CD8-positive, alpha-beta T cell (primary cell): ENCODE measurements at regions of chr22 and their contacts with region 1.

Region 1: DNA sequence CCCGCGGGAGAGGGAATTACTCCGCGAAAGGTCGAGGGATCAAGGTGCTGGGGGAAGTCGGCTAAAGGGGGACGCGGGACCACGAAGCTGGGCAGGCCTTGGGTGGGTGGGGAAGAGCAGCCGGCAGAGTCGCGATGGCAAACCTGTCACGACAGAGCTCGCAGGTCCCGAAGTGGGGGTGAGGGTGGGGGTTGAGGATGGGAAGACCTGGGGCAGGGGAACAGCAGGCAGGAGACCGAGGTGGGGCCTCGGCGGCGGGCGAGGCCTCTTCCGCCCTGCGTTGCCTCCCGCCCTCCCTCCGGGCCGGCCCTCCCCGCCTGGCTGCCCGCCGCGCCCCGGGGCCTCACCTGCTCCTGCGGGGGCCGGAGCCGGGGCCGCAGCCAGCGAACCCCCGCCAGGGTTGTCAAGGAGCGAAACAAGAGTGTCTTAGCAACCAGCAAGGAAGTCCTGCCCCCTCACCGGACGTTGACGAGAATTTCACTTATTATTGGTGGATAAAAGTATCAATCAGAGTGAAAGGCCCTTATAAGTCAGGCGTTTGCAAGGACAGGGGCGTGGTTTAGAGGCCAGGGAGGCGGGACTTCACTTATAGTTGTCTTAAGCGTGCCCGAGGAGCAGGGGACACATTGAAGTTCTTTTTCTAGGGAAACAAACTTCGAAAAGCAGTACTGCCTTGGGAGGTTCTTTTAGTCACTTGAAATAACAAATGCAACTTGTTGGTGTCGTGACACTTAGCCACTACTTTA is at the start of gene DNAL4:
- DNase-seq: peak; percentile 82 to 97 (median 92)
- ATAC-seq: peak; percentile 98
- H3K4me3 ChIP-seq: peak within 1 kb of the TSS; percentile 62 to 67
- H3K4me3 Mint-ChIP-seq: peak within 1 kb of the TSS; percentile 92
- H3K27ac ChIP-seq: peak within 1 kb of the TSS; percentile 68 to 75
- H3K27ac Mint-ChIP-seq: peak within 1 kb of the TSS; percentile 94
- H3K4me1 ChIP-seq: peaks cover 25% of the 10 kb centered on the region
- H3K4me1 Mint-ChIP-seq: peaks cover 31% of the 10 kb centered on the region
- H3K27me3 ChIP-seq: no peaks in the 10 kb centered on the region
- H3K27me3 Mint-ChIP-seq: peaks cover 10% of the 10 kb centered on the region
- CTCF ChIP-seq: no peak
- total RNA-seq, gene DNAL4: 2.5 to 3.6 TPM

Region 2: DNA sequence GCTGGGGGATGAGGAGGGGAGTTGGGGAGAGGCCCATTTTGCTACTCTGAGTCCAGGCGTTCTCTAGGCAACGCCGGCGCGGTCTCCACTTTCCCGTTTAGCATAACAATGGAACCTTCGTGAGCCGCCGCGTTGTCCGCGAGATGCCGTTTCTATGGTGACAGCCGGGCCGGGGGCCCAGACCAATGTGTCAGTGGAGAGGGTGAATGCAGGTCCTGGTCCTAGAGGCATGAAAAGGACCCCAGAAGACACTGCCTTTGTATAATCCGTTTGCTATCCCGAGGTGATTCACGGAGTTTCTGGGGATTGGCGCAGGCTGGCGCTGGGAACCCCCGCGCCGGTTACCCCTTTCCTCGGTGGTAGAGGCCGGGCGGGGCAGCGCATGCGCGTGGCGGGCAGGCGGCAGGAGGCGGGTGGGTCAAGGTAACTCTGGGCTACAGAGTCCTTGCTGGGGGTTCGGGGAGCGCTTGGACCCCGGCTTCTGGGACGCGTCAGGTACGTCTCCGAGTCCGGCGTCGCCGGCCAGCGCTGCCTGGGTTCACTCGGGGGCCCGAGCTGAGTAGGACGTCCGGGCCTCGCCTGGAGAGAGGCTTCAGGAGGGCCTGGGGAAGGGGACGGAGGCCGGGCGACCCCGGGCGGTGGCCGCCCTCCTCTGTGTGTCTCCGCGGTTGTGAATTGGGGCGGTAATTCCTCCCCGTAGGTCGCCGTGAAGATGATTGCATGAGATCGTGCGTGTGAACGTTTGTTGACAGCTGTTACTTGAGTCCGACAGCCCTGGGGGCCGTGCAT is 137.4 kb before region 1 on chr22 and contains the starts of genes CBY1 and FAM227A:
- CTCF ChIA-PET with region 1: no interaction called
- POLR2A ChIA-PET with region 1: no interaction called
- intact Hi-C with region 1: loop called in 1 of 2 experiments (anchors 5 kb)
- DNase-seq: peak; percentile 76 to 94 (median 87)
- ATAC-seq: peak; percentile 84
- H3K4me3 ChIP-seq: peak within 1 kb of the TSS; percentile 75 to 94
- H3K4me3 Mint-ChIP-seq: peak within 1 kb of the TSS; percentile 96
- H3K27ac ChIP-seq: peak within 1 kb of the TSS; percentile 94 to 96
- H3K27ac Mint-ChIP-seq: peak within 1 kb of the TSS; percentile 99
- H3K4me1 ChIP-seq: peaks cover 11% of the 10 kb centered on the region
- H3K4me1 Mint-ChIP-seq: peaks cover 30% of the 10 kb centered on the region
- H3K27me3 ChIP-seq: no peaks in the 10 kb centered on the region
- H3K27me3 Mint-ChIP-seq: no peaks in the 10 kb centered on the region
- CTCF ChIP-seq: no peak
- total RNA-seq, gene CBY1: 7.6 to 8.9 TPM
- total RNA-seq, gene FAM227A: 0.73 TPM in 1 of 2 experiments, not detected in the other

Region 3: DNA sequence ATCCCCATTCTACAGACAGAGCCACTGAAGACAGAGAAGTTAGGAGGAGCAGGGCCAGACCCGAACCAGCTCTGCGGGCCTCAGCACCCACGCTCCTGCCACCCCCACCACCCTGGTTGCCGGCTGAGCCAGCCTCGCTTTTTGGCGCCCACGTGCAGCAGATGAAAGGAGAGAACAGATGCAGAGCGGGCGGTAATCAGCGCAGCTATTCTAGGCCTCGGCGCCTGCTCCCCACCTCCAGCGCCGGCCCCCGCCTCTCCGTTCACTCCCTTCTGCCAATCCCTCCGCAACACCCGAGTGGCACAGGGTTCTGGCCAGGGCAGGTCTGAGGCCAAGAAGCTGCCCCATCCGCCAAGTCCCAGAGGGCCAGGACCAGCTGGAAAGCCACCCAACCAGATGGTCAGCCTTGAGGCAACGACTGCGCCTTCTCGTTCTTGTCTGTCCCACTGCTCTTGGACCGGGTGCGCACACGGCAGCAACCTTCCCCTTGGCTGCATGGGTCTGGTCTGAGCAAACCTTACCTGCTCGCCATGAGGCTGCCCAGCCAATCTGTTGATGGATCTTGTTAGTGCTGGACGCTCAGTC is 16.7 kb before region 1 on chr22:
- CTCF ChIA-PET with region 1: no interaction called
- POLR2A ChIA-PET with region 1: no interaction called
- intact Hi-C with region 1: no loop called
- DNase-seq: no peak
- ATAC-seq: no peak
- H3K4me3 ChIP-seq: no peak overlapping the region
- H3K4me3 Mint-ChIP-seq: no peak overlapping the region
- H3K27ac ChIP-seq: no peak overlapping the region
- H3K27ac Mint-ChIP-seq: no peak overlapping the region
- H3K4me1 ChIP-seq: no peaks in the 10 kb centered on the region
- H3K4me1 Mint-ChIP-seq: peaks cover 3% of the 10 kb centered on the region
- H3K27me3 ChIP-seq: no peaks in the 10 kb centered on the region
- H3K27me3 Mint-ChIP-seq: no peaks in the 10 kb centered on the region
- CTCF ChIP-seq: no peak

Region 4: DNA sequence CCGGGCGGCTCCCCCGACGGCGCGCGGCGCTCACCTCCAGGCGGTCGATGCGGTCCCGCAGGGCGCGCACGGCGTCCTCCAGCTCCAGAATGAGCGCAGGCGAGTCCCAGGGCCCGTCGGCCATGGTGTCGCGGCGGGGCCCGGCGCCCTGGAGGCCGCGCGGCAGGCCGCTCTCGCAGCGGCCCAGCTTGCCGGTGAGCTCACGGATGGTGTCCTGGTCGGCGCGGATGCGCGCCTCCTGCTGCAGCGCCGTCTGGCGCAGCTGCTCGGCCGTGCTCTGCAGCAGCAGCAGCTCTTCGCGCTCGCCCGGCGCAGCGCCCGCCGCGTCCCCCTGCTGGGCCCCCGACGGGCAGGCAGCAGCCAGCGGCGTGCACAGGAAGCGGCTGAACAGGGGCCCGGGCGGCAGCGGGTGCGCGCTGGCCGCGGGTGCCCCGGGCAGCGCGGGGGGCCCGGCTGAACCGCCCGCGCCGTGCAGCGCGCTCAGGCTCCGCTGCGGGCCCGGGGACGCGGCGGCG is 49.4 kb after region 1 on chr22:
- CTCF ChIA-PET with region 1: no interaction called
- POLR2A ChIA-PET with region 1: no interaction called
- intact Hi-C with region 1: loop called in 1 of 2 experiments (anchors 2 kb)
- DNase-seq: peak; percentile 19 to 85 (median 54)
- ATAC-seq: peak; percentile 85
- H3K4me3 ChIP-seq: peak overlapping the region in 1 of 2 experiments; percentile 50
- H3K4me3 Mint-ChIP-seq: peak overlapping the region; percentile 29
- H3K27ac ChIP-seq: no peak overlapping the region
- H3K27ac Mint-ChIP-seq: no peak overlapping the region
- H3K4me1 ChIP-seq: peaks cover 19% of the 10 kb centered on the region
- H3K4me1 Mint-ChIP-seq: peaks cover 26% of the 10 kb centered on the region
- H3K27me3 ChIP-seq: no peaks in the 10 kb centered on the region
- H3K27me3 Mint-ChIP-seq: peaks cover 14% of the 10 kb centered on the region
- CTCF ChIP-seq: no peak